Astrocyte of the cerebellum (primary cell): ENCODE measurements at regions of chr2 and their contacts with region 1.

Region 1: DNA sequence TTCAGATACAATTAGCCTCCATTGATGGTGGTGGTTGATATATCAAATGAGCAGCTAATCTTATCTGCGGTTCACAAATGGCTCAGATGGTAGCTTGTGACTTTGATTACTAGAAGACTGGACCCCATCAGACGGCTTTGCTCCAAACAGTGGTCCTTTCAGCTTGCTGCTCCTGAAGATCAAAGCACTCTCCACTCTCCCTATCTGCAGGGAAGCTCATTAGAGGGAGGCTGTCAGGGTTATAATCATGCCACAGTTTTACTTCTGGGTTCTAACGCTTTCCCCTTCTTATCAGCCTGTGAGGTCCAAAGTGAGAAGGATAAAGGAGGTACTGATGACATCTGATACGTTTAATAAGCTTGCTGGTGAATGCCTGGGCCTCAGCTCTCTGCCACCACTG is 247.1 kb upstream of the NT5C1B start:
- DNase-seq: no peak
- H3K4me3 ChIP-seq: no peak overlapping the region
- CTCF ChIP-seq: no peak

Region 2: DNA sequence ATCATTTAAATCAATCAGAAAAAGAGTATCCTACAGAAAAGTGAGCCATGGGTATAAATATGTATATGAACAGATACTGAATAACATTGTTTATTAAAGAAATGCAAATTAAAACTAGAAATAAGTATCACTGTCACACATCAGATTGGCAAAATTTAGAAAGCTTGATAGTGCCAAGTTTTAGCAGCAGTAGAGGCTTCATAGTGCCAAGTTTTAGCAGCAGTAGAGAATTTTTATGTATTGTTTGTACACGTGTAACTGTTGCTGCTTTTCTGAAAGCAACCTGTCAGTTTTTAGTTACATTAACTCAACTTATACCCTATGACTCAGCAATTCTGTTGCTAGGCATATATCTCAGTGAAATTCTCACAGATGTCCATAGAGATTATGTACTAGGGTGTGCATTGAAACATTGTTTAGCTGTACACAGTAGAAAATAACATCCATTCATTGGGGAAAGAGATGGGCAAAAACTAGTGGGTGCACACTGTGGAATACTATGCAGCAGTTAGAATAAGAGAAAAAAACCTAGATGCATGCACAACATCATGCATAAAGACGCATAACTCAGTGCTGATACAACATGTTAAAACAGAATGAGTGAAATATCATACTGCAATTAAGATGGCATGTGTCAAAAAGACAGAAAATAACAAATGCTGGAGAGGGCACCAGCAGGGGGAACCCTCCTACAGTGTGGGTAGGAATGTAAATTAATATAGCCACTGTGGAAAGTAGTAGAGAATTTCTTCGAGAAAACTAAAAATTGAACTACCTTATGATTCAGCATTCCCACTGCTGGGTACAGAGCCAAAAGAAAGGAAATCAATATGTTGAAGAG is 47.4 kb after region 1 on chr2:
- in situ Hi-C with region 1: loop called (anchors 5 kb)
- DNase-seq: no peak
- H3K4me3 ChIP-seq: no peak overlapping the region
- CTCF ChIP-seq: peak; percentile 22